Mammary epithelial cell (primary cell): ENCODE measurements at regions of chr5 and their contacts with region 1.

Region 1: DNA sequence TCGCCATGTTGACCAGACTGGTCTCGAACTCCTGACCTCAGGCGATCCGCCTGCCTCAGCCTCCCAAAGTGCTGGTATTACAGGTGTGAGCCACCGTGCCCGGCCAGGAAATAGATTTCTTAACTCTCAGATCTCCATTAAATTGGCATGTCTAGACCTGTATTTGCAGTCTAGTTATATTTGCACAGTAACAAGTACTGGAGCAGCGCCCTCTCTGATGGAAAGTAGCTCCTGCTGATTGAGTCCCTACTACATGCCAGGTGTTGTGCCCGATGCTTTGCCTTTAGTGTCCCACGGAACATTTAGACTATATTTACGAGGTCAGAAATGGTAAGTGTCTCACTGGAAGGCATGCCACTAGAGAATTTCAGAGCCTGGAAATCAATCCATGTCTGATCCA is 15.8 kb upstream of the TMED9 start:
- DNase-seq: peak; percentile 12
- H3K4me3 ChIP-seq: no peak overlapping the region
- H3K27ac ChIP-seq: no peak overlapping the region
- H3K4me1 ChIP-seq: peaks cover 10% of the 10 kb centered on the region
- H3K27me3 ChIP-seq: no peaks in the 10 kb centered on the region
- CTCF ChIP-seq: no peak

Region 2: DNA sequence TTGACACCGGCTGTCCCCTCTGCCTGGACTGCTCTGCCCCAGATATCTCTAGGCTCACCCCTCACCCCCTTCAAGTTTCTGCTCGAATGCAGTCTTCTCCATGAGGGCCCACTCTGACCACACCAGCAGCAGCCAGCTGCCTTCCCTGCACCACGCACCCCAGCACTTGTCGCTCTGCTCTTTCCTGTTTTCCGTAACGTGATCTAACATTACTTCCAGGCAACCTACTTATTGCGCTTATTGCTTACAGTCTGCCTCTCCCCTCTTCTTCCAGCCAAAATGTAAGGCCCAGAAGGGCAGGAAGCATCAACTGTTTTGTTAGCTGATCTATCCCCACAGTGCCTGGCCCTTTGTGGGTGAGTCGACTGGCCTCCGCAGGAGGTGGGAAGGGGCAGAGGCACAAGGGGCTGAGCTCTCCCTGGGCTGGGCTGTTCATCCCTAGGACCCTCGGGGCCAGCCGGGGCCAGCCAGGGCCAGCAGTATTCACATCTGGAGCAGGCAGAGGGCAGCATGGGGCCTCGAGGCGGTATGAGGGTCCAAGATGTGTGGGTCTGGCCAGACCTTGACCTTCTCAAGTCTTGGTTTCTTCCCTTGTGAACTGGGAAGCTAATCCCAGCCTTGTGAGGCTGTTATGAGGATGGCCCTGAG is 91.1 kb before region 1 on chr5:
- CTCF ChIA-PET with region 1: interaction called, 16 read pairs
- dilution Hi-C with region 1: no loop called
- in situ Hi-C with region 1: no loop called
- intact Hi-C with region 1: no loop called
- DNase-seq: no peak
- H3K4me3 ChIP-seq: no peak overlapping the region
- H3K27ac ChIP-seq: no peak overlapping the region
- H3K4me1 ChIP-seq: no peaks in the 10 kb centered on the region
- H3K27me3 ChIP-seq: no peaks in the 10 kb centered on the region
- CTCF ChIP-seq: no peak